Ovary (tissue), 10 donors: ENCODE measurements at regions of chr16 and their contacts with region 1.

Region 1: GRCh38 chr16:10181196-10182162 is 749 bp downstream of the GRIN2A start:
- DNase-seq: peak in 4 of 5 donors; percentile 43 to 75 (median 60)
- H3K4me3 ChIP-seq: peak overlapping the region; percentile 3
- H3K27ac ChIP-seq: no peak overlapping the region
- H3K4me1 ChIP-seq: peaks cover 4% of the 10 kb centered on the region
- H3K27me3 ChIP-seq: no peaks in the 10 kb centered on the region
- CTCF ChIP-seq: peak; percentile 47 to 54 (median 54)
- EP300 ChIP-seq: no peak
- POLR2A ChIP-seq: no peak

Region 2: GRCh38 chr16:9134739-9135138 is 1046.7 kb before region 1 on chr16:
- intact Hi-C with region 1: loop called in 1 of 4 experiments (anchors 5 kb)
- DNase-seq: peak in 2 of 5 donors; percentile 31 to 48
- H3K4me3 ChIP-seq: no peak overlapping the region
- H3K27ac ChIP-seq: no peak overlapping the region
- H3K4me1 ChIP-seq: peaks cover 1% of the 10 kb centered on the region
- H3K27me3 ChIP-seq: no peaks in the 10 kb centered on the region
- CTCF ChIP-seq: no peak
- EP300 ChIP-seq: no peak
- POLR2A ChIP-seq: no peak

Region 3: DNA sequence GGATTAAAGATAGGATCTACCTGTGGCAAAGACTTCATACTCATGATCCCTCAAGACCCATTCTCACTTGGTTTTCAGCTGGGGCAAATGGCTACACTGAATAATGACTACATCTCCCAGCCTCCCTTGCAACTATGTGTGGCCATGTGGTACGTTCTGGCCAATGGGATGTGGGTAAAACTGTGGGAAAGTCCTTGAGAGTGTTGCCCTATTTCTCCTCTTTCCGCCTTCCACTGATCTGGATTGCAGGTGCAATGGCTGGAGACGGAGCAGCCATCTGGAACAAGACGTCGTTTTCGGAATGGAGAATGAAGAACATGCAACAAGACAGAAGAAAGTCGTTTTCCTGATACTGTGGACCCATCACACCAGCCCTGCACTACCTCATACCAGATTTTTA is 1041.5 kb before region 1 on chr16:
- intact Hi-C with region 1: loop called in 2 of 4 experiments (anchors 5 to 10 kb)
- DNase-seq: no peak
- H3K4me3 ChIP-seq: no peak overlapping the region
- H3K27ac ChIP-seq: no peak overlapping the region
- H3K4me1 ChIP-seq: peaks cover 1% of the 10 kb centered on the region
- H3K27me3 ChIP-seq: no peaks in the 10 kb centered on the region
- CTCF ChIP-seq: no peak
- EP300 ChIP-seq: no peak
- POLR2A ChIP-seq: no peak

Region 4: GRCh38 chr16:9365376-9365728 is 816.1 kb before region 1 on chr16:
- intact Hi-C with region 1: loop called in 1 of 4 experiments (anchors 10 kb)
- DNase-seq: peak in 1 of 5 donors; percentile 18
- H3K4me3 ChIP-seq: no peak overlapping the region
- H3K27ac ChIP-seq: no peak overlapping the region
- H3K4me1 ChIP-seq: no peaks in the 10 kb centered on the region
- H3K27me3 ChIP-seq: no peaks in the 10 kb centered on the region
- CTCF ChIP-seq: no peak
- EP300 ChIP-seq: peak; percentile 13
- POLR2A ChIP-seq: no peak

Region 5: DNA sequence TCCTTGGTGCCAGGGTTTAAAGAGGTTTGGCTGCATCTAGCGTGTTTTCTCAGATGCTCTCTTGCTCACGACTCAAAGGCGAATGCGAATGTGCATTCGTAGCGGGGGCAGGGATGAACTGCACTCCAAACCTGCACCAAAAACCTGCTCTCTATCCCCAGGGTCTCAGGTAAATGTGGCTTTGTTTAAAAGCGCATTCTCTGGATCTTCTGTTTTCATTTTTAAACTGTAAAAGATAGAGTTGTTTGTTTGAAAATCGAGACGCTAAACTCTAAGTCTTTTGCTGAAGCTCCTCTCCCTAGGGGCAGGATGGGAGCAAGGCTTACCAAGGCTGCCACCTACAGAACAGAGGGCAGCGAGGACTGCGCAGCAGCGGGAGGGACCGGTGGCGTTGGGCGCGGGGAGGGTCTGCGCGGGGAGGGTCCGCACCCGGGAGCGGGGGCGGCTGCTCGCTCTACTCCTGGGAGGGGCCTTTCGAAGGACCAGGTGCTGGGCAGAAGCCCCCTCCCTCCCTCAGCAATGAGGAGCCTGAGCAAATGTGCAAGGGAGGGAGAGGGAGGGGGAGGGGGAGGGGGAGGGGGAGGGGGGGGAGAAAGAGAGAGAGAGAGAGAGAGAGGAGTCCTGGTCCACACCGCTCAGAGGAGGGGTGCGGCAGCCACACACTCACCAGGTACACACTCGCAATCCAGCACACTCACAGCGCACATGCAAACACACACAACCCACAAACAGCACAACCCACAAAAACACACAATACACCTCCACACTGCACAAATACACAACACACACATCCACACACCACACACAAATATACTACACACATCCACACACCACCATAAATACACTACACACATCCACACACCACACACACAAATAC is 142.0 kb before region 1 on chr16:
- intact Hi-C with region 1: loop called in 1 of 4 experiments (anchors 10 kb)
- DNase-seq: peak; percentile 18 to 50 (median 43)
- H3K4me3 ChIP-seq: peak overlapping the region; percentile 11
- H3K27ac ChIP-seq: no peak overlapping the region
- H3K4me1 ChIP-seq: no peaks in the 10 kb centered on the region
- H3K27me3 ChIP-seq: no peaks in the 10 kb centered on the region
- CTCF ChIP-seq: no peak
- EP300 ChIP-seq: no peak
- POLR2A ChIP-seq: no peak

Region 6: DNA sequence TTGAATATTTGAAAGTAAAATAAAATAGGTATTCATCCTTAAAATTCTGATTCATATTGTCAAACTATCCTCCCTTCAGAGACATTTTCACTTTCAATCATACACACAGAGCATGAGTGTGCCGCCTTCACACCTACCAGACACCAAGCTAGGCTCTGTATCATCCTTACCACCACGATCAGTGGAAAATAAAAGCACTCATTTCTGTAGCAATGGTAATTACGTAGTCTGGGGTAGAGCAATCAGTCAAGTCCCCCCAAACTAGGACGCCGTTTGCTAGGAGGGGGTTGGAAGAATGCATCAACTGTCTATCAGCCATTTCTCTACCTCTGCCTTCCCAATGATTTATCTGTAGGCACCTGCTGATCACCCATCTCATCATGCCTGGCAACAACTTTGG is 85.3 kb after region 1 on chr16:
- intact Hi-C with region 1: no loop called
- DNase-seq: no peak
- H3K4me3 ChIP-seq: no peak overlapping the region
- H3K27ac ChIP-seq: no peak overlapping the region
- H3K4me1 ChIP-seq: no peaks in the 10 kb centered on the region
- H3K27me3 ChIP-seq: no peaks in the 10 kb centered on the region
- CTCF ChIP-seq: no peak
- EP300 ChIP-seq: no peak
- POLR2A ChIP-seq: no peak